Stomach (tissue), 19 donors: ENCODE measurements at regions of chr4 and their contacts with region 1.

Region 1: GRCh38 chr4:69881173-69881773 is 21.3 kb upstream of the SULT1E1 start:
- DNase-seq: peak; percentile 35 to 80
- H3K4me3 ChIP-seq: no peak overlapping the region
- H3K27ac ChIP-seq: no peak overlapping the region
- H3K4me1 ChIP-seq: peaks cover 0 to 4% (median 0%) of the 10 kb centered on the region in 4 donors
- H3K27me3 ChIP-seq: no peaks in the 10 kb centered on the region
- CTCF ChIP-seq: peak in 5 of 7 experiments; percentile 46 to 78 (median 70)
- EP300 ChIP-seq: no peak
- POLR2A ChIP-seq: no peak

Region 2: GRCh38 chr4:69697536-69698242 is 183.6 kb before region 1 on chr4:
- intact Hi-C with region 1: loop called (anchors 10 kb)
- DNase-seq: no peak
- H3K4me3 ChIP-seq: no peak overlapping the region
- H3K27ac ChIP-seq: no peak overlapping the region
- H3K4me1 ChIP-seq: no peaks in the 10 kb centered on the region
- H3K27me3 ChIP-seq: no peaks in the 10 kb centered on the region
- CTCF ChIP-seq: no peak
- EP300 ChIP-seq: no peak
- POLR2A ChIP-seq: no peak